ENCODE measurements at regions of chr19 and their contacts with region 1.

Region 1: DNA sequence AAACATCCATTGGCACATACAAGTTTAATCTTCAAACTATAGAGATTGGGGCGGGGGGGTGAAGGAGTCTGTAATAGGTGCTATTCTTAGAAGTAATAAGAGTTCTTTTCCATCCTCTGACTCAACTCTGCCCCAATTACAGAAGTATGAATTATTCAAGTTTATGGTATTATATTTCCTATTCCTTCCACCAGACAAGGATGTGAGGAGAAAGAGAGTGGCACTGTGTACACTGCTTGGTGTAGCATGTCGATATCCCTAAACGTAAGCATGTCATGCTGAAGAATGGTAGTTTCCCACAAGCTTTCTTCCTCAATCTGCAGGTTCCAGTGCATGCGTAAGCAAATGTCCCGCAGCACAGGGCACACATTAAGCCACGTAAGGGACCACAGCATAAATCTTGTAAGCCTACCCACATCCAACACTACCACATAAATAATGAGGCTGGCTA is 14.1 kb downstream of the BRD4 start:
- DNase-seq: peak; percentile 88
- ATAC-seq: peak; percentile 81
- H3K4me3 ChIP-seq: peak overlapping the region in 1 of 5 experiments; percentile 5
- H3K4me3 Mint-ChIP-seq: peak overlapping the region; percentile 72
- H3K27ac ChIP-seq: peak overlapping the region; percentile 79 to 86
- H3K27ac Mint-ChIP-seq: peak overlapping the region; percentile 86
- H3K4me1 ChIP-seq: peaks cover 85 to 97% of the 10 kb centered on the region in 2 donors
- H3K4me1 Mint-ChIP-seq: peaks cover 87% of the 10 kb centered on the region
- H3K27me3 ChIP-seq: no peaks in the 10 kb centered on the region
- H3K27me3 Mint-ChIP-seq: no peaks in the 10 kb centered on the region
- CTCF ChIP-seq: no peak

Region 2: GRCh38 chr19:15304140-15304705 is 14.0 kb before region 1 on chr19:
- CTCF ChIA-PET with region 1: interaction called, 6 read pairs
- POLR2A ChIA-PET with region 1: interaction called, 6 read pairs
- intact Hi-C with region 1: loop called (anchors 2 kb)
- DNase-seq: no peak
- ATAC-seq: no peak
- H3K4me3 ChIP-seq: no peak overlapping the region
- H3K4me3 Mint-ChIP-seq: peak overlapping the region; percentile 56
- H3K27ac ChIP-seq: peak overlapping the region in 1 of 2 donors; percentile 45
- H3K27ac Mint-ChIP-seq: peak overlapping the region; percentile 28
- H3K4me1 ChIP-seq: peaks cover 76 to 78% of the 10 kb centered on the region in 2 donors
- H3K4me1 Mint-ChIP-seq: peaks cover 79% of the 10 kb centered on the region
- H3K27me3 ChIP-seq: no peaks in the 10 kb centered on the region
- H3K27me3 Mint-ChIP-seq: no peaks in the 10 kb centered on the region
- CTCF ChIP-seq: no peak